ENCODE measurements at regions of chr20 and their contacts with region 1.

Region 1: DNA sequence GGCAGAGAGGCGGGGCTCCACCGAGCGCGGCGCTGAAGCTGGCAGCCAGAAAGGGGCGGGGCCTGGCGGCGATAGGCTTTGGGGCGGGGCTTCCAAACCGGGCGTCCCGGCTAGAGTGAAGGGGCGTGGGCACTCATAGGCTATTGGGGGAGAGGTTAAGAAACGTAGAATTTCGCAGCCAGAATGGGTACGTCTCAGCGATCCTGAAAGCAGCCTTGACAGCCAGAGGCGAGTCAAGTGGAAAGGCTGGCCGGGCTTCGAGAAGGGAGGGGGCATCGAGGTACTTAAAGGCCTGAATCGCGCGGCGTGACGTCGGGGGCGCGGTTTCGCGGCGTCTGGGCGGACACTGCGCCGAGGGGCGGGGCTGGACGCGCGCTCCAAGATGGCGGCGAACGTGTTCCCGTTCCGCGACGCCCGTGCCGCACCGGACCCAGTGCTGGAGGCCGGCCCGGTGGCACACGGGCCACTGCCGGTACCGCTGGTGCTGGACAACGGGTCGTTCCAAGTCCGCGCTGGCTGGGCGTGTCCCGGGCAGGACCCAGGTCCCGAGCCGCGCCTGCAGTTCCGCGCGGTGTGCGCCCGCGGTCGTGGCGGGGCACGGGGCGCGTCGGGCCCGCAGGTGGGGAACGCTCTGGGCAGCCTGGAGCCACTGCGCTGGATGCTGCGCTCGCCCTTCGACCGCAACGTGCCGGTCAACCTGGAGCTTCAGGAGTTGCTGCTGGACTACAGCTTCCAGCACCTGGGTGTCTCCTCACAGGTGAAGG is at the start of gene ACTR5:
- DNase-seq: peak; percentile 88 to 92 (median 91)
- H3K4me3 ChIP-seq: peak within 1 kb of the TSS; percentile 63 to 92 (median 88)
- H3K27ac ChIP-seq: peak within 1 kb of the TSS; percentile 33 to 86
- H3K4me1 ChIP-seq: peaks cover 6 to 19% (median 17%) of the 10 kb centered on the region in 4 experiments
- H3K27me3 ChIP-seq: peaks cover 0 to 4% (median 0%) of the 10 kb centered on the region in 5 experiments

Region 2: DNA sequence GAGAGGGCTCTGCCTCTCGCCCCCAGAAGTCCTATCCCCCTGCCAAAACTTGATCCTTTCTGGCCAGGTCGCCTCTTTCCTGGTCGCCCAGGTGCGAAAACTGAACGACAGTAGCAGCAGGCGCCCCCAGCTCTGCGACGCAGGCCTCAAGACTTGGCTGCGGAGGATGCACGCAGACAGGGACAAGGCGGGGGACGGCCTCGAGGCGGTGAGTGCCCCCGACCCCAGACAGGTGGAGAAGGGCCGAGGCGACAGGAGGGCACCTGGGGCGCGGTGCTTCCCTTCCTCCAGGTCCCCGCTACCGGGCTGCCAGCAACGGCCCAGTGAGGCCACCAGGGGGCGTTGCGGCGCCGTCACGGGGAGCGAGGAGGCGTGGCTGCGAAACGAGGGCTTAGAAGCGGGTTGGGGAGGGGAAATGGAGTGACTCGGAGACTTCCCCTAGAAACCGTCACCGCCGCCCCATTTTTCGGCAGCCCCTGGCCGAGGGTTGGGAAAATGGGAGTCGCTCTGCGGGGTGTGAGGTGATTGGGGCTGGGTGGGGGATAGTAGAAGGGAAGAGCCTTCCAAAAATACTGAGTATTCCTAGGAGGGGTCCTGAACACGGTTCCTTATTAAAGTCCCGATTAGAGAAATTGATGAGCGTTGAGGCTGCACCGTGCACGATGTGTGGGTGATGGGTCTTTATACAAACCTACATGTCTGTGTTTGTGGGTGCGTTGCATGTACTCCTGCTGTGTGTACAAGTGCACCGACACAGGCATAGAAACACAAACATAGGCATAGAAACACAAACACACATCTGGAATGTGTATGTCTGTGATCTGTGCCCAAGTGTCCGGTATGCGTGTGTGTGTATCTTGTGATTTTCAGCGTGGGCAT is 102.1 kb before region 1 on chr20:
- CTCF ChIA-PET with region 1: interaction called, 132 read pairs
- POLR2A ChIA-PET with region 1: no interaction called
- DNase-seq: peak; percentile 82 to 90 (median 88)
- H3K4me3 ChIP-seq: peak overlapping the region in 4 of 7 experiments; percentile 32 to 67 (median 61)
- H3K27ac ChIP-seq: no peak overlapping the region
- H3K4me1 ChIP-seq: peaks cover 0 to 8% (median 5%) of the 10 kb centered on the region in 4 experiments
- H3K27me3 ChIP-seq: peaks cover 0 to 60% (median 20%) of the 10 kb centered on the region in 5 experiments

Region 3: DNA sequence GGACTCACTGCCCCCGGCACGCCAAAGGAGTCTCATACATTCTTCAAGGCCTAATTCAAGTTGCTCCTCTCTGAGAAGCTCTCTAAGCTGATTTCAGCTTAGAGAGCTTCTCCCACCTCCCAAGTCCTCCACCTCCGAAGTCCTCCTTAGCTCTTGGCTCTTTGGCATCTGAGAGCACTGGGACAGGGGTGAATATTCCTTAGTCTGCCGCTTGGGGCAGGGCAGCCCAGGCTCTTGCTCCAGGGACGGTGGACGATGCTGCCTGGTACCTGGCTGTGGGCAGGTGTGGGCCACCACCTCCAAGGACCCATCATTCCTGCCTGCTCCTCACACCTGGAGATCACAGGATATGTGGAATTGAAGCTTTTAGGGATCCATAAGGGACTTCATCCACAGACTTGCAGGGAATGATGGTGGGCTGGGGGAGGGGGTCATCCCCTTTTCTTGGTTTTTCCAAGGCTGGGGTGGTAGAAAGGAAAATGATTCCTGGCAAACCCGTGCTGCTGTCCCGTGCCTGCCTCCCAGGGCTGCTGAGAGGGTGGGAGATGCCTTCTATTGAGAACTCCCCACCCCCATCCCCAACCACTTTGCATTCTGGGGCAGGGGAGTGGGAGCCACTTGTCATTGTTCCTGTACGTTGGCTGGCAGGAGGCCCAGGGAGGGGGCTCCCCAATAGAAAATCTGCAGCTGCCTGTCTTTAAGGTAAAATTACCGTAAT is 89.2 kb before region 1 on chr20:
- CTCF ChIA-PET with region 1: interaction called, 15 read pairs
- POLR2A ChIA-PET with region 1: interaction called, 3 read pairs
- DNase-seq: peak in 2 of 3 donors; percentile 24 to 32
- H3K4me3 ChIP-seq: no peak overlapping the region
- H3K27ac ChIP-seq: no peak overlapping the region
- H3K4me1 ChIP-seq: no peaks in the 10 kb centered on the region
- H3K27me3 ChIP-seq: peaks cover 0 to 62% (median 5%) of the 10 kb centered on the region in 5 experiments

Region 4: DNA sequence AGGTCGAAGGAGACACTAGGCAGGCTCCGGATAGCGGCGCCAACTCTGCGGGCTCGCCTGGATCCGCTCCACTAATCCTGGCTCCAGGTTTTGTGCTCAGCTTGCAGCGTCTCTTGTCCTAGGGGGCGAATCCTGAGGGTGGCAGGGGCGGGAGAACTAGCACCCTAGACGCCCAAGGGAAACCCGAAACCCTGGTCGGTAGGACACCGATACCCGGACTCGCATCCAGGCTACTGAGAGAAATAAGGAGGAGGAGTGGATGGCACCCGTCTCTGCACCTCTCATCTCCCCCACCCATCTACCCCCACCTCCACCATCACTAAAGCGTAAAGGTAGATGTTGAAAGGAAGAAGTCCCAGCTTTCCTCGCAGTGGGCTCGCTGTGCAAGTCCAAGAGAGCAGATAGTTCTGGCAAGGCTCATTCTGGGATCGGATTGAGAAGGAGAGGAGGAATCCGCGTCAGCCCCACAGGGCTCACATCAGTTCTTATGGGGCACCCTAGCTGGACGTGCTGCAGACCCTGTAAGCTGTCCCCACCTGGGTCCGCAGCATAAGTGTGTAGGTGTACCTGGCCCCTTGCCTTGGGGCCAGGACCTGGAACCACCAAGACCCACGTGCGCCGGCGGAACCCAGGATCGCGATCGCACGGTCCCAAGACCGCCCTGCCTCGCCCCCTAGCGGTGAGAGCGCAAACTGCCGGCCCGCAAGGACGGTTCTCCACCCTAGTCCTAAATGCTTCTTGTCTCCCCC is 17.1 kb before region 1 on chr20:
- CTCF ChIA-PET with region 1: interaction called, 134 read pairs
- POLR2A ChIA-PET with region 1: no interaction called
- DNase-seq: peak; percentile 78 to 82 (median 80)
- H3K4me3 ChIP-seq: peak overlapping the region in 6 of 7 experiments; percentile 6 to 68 (median 24)
- H3K27ac ChIP-seq: no peak overlapping the region
- H3K4me1 ChIP-seq: peaks cover 0 to 41% (median 20%) of the 10 kb centered on the region in 4 experiments
- H3K27me3 ChIP-seq: peaks cover 16 to 99% (median 58%) of the 10 kb centered on the region in 5 experiments

Region 5: DNA sequence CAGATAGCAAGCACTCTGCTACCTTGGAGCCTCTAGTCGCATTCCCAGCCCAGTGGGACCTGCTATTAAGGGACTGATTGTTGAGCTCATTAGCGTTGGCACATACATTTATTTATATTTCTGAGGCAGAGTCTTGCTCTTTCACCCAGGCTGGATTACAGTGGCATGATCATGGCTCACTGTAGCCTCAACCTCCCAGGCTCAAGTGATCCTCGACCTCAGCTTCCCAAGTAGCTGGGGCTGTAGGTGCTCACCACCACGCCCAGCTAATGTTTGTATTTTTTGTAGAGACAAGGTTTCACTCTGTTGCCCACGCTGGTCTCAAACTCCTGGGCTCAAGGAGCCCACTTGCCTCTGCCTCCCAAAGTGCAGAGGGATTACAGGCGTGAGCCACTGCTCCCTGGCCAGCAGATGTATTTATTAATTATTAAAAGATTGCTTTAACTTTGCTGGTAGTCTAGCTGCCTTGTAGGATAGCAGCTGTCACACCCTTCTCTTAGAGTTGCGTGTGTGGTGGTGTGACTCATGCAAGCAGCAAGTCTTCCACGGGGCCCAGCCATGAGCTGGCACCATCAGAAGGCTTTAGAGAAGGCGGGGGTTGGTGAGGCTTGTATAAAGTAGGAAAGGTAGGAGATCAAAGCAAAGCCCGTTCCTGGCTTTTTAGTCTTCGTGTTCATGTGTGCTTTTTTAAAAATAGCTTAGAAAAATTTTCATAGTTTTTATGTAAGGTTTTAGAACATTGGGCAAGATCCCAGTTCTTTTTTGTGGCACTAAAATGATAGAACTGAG is 16.5 kb after region 1 on chr20:
- CTCF ChIA-PET with region 1: interaction called, 76 read pairs
- POLR2A ChIA-PET with region 1: interaction called, 4 read pairs
- DNase-seq: no peak
- H3K4me3 ChIP-seq: no peak overlapping the region
- H3K27ac ChIP-seq: no peak overlapping the region
- H3K4me1 ChIP-seq: no peaks in the 10 kb centered on the region
- H3K27me3 ChIP-seq: no peaks in the 10 kb centered on the region

Region 6: GRCh38 chr20:38790200-38791053 is 42.1 kb after region 1 on chr20:
- CTCF ChIA-PET with region 1: interaction called, 11 read pairs
- POLR2A ChIA-PET with region 1: no interaction called
- DNase-seq: peak; percentile 74 to 84 (median 81)
- H3K4me3 ChIP-seq: no peak overlapping the region
- H3K27ac ChIP-seq: no peak overlapping the region
- H3K4me1 ChIP-seq: peaks cover 0 to 13% (median 6%) of the 10 kb centered on the region in 4 experiments
- H3K27me3 ChIP-seq: no peaks in the 10 kb centered on the region

Region 7: DNA sequence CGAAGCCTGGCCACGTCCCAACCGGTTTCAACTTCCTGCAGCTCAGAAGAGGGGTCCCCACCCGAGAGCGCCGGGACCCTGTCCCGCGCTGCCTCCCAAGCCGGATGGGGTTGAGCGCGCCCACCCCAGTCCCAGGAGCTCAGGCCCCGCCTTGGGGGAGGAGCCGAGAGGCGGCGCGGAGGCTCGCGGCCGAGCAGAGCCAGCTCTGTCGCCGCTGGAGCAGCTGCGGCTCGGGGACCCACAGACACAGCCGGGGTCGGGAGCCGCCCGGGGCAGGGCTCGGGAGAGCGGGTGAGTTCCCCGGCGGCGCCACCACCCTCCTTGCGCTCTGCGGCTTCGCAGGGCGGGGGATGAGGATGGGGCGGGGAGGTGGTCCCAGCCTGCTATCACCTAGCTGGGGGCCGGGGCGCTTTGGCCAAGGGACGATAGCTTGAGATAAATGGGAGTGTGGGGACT is 57.3 kb after region 1 on chr20 and contains the start of gene PPP1R16B:
- CTCF ChIA-PET with region 1: interaction called, 13 read pairs
- POLR2A ChIA-PET with region 1: interaction called, 5 read pairs
- DNase-seq: peak; percentile 80 to 88 (median 88)
- H3K4me3 ChIP-seq: peak within 1 kb of the TSS; percentile 71 to 92 (median 81)
- H3K27ac ChIP-seq: peak within 1 kb of the TSS; percentile 98
- H3K4me1 ChIP-seq: peaks cover 18 to 57% (median 44%) of the 10 kb centered on the region in 4 experiments
- H3K27me3 ChIP-seq: peaks cover 0 to 2% (median 0%) of the 10 kb centered on the region in 5 experiments

Region 8: GRCh38 chr20:39036011-39036410 is 287.7 kb after region 1 on chr20:
- CTCF ChIA-PET with region 1: no interaction called
- POLR2A ChIA-PET with region 1: no interaction called
- DNase-seq: no peak
- H3K4me3 ChIP-seq: no peak overlapping the region
- H3K27ac ChIP-seq: no peak overlapping the region
- H3K4me1 ChIP-seq: no peaks in the 10 kb centered on the region
- H3K27me3 ChIP-seq: no peaks in the 10 kb centered on the region

Measured in common myeloid progenitor, CD34-positive (primary cell).